Mammary epithelial cell (primary cell): ENCODE measurements at regions of chr1 and their contacts with region 1.

Region 1: DNA sequence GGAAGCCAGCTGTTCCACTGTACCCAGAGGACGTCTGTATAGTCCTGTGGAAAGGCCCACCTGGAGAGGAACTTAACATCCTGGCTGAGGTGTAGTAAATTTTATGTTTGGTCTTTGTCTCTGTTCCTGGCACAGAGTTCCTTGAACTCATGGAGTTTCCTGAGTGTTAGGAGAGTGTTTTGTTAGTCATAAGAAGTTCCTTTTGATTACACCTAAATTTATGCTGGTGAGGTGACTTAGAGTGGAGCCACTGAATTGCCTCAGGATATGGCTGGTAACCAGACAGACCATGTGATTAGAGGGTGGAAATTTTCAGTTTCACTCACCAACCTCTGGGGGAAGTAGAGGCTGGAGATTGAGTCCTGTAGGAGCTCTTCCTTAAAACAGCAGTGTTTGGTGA is 57.9 kb downstream of the RASAL2 start:
- DNase-seq: peak; percentile 83
- H3K4me3 ChIP-seq: no peak overlapping the region
- H3K27ac ChIP-seq: peak overlapping the region; percentile 63
- H3K4me1 ChIP-seq: peaks cover 20% of the 10 kb centered on the region
- H3K27me3 ChIP-seq: no peaks in the 10 kb centered on the region
- CTCF ChIP-seq: peak; percentile 19 to 22

Region 2: DNA sequence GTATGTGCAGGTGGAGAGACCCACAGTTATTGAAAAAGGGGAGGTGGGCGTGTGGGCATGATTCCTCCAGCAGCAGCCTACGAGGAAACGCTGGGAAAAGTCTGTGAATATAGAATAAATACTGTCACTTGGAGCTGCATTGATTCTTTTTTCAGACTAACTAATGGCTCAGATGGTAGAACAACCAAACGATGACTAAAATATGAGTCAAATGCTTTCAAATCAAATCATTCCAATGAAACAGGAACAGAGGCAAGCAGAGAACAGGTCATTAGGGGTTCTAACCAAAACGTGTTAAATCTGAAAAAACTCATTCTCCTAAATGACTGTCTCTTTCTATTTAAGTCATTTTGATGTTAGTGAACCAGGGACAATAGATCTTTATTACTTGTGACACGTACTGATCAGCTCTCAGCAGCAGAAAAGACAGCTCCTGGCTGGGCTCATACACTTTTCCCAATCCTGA is 146.9 kb before region 1 on chr1:
- CTCF ChIA-PET with region 1: no interaction called
- dilution Hi-C with region 1: no loop called
- in situ Hi-C with region 1: no loop called
- intact Hi-C with region 1: no loop called
- DNase-seq: peak; percentile 67
- H3K4me3 ChIP-seq: no peak overlapping the region
- H3K27ac ChIP-seq: peak overlapping the region; percentile 35
- H3K4me1 ChIP-seq: peaks cover 12% of the 10 kb centered on the region
- H3K27me3 ChIP-seq: no peaks in the 10 kb centered on the region
- CTCF ChIP-seq: no peak

Region 3: GRCh38 chr1:178055779-178056471 is 95.9 kb before region 1 on chr1:
- CTCF ChIA-PET with region 1: no interaction called
- dilution Hi-C with region 1: no loop called
- in situ Hi-C with region 1: no loop called
- intact Hi-C with region 1: no loop called
- DNase-seq: no peak
- H3K4me3 ChIP-seq: no peak overlapping the region
- H3K27ac ChIP-seq: no peak overlapping the region
- H3K4me1 ChIP-seq: peaks cover 43% of the 10 kb centered on the region
- H3K27me3 ChIP-seq: no peaks in the 10 kb centered on the region
- CTCF ChIP-seq: peak in 1 of 2 donors; percentile 22

Region 4: DNA sequence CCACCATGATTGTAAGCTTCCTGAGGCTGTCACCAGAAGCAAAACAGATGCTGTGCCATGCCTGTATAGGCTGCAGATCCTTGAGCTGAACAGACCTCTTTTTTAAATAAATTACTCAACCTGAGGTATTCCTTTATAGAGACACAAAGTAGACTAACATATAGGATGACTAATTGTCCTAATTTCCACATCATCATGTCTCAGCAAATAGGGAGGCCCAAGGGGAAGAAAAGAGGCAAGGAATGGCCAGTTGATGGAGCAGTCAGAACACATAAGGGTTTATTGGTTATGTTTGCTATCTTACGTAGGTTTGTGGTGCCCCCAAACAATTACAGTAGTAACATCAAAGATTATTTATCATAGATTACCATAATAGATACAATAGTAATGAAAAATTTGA is 68.3 kb after region 1 on chr1:
- CTCF ChIA-PET with region 1: no interaction called
- dilution Hi-C with region 1: loop called (anchors 5 kb)
- in situ Hi-C with region 1: no loop called
- intact Hi-C with region 1: no loop called
- DNase-seq: peak; percentile 75
- H3K4me3 ChIP-seq: no peak overlapping the region
- H3K27ac ChIP-seq: no peak overlapping the region
- H3K4me1 ChIP-seq: peaks cover 14% of the 10 kb centered on the region
- H3K27me3 ChIP-seq: no peaks in the 10 kb centered on the region
- CTCF ChIP-seq: peak in 1 of 2 donors; percentile 17